ENCODE measurements at regions of chr18 and their contacts with region 1.

Region 1: DNA sequence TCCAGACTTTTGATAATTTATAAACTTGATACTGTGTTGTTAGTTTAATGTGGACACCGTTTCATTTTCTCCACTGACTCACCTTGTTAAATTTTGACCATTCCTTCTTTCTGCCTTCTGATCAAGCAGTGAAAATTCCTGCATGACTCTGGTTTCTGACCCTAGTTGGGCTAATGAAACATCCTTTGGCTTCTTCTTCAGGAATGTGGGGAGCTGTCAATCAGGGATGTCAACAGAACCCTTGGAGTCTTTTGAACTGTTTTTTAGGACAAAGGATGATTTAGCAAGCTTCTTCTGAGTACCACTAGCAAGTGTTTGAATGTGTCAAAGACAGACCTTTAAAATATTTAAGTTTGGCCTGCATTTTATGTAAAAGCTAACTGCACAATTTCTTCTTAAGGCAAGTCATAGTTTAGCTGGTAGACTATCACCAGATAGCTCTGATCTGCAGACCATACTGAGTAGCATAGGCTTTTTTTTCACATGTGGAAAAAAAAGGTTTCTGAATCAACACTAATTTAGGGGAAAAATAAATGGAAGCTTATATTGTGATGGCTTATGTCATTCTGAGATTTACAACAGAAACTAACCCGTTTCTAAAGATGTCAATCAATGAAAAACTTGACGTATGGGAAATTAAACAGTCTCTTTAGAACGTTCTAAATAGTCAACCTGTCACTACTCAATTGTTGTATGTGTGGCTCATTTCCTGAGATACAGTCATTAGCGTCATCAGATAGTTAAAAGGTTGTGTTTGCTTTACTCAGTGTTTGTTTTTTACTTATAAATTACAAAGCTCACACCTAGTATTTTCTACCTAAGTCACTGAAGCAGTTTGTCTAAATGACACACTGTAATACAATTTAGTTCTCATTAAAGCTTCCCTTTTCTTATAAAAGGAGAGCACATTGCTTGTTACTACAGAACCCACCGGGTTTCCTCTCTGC is 311.4 kb downstream of the PTPRM start:
- DNase-seq: no peak
- H3K4me3 Mint-ChIP-seq: peak overlapping the region; percentile 15
- H3K27ac Mint-ChIP-seq: peak overlapping the region; percentile 67
- H3K4me1 Mint-ChIP-seq: peaks cover 35% of the 10 kb centered on the region
- H3K27me3 Mint-ChIP-seq: no peaks in the 10 kb centered on the region
- CTCF ChIP-seq: no peak

Region 2: DNA sequence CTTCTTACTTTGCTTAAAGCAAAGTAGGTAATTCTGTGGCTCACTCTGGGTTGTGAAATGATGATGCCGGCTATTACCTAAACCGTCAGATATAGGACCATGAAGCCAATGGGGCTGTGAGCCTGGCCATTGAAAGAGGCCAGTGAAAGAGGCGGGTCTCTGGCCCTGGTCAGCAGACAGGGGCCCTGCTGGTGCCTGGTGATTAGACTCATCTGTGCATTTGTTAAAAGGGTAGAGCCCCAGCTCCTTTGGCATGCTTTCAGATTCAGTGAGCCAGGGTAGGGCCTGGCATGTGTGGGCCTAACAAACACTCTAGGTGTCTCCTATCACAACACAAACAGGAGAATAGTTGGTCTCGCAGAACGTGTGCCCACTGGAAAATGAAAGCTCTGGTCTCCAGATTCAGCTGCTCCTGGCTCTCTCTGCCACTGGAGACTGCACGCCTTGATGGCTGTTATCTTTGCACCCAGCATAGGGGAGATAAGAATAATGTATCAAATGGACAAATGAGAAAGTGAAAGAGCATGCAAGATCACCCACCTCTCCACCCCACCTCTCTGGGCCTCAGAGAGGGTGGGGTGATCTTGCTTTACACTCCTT is 640.8 kb before region 1 on chr18:
- CTCF ChIA-PET with region 1: no interaction called
- intact Hi-C with region 1: no loop called
- DNase-seq: no peak
- H3K4me3 Mint-ChIP-seq: no peak overlapping the region
- H3K27ac Mint-ChIP-seq: no peak overlapping the region
- H3K4me1 Mint-ChIP-seq: no peaks in the 10 kb centered on the region
- H3K27me3 Mint-ChIP-seq: peaks cover 65% of the 10 kb centered on the region
- CTCF ChIP-seq: no peak

Region 3: DNA sequence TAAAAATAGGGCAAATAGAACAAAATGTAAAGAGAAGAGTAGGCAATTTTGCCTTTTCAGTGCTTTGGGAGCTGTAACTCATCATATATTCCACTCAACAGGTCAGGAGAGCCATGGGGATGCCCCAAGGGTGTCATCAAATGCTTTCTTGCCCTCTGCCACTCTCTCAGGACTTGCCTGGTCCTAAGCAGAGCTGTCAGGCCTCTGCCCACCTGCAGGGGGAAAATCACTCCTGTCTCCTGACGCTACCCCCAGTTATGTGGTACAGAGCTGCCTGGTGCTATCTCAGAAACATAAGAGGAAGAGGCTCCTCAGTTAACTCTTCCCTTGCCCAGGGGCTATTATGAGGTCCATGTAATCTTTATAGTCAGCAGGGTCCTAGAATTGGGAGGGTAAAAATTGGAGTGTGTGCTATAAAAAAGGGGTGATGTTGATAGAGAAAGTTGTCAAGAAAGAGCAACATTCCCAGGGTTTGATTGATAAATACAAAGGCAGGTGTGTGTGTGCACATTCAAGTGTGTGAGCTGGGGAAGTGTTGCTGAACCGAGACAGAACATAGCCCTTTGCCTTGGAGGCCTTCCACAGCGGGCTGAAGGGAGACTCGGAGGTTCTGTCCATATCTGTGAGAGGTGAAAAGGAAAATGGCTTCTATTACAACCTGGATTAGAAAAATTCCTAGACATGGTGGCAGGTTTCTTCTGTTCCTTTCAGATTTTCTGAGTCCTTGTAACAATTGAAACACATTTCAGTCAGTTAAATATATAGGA is 286.1 kb before region 1 on chr18:
- CTCF ChIA-PET with region 1: no interaction called
- intact Hi-C with region 1: no loop called
- DNase-seq: no peak
- H3K4me3 Mint-ChIP-seq: no peak overlapping the region
- H3K27ac Mint-ChIP-seq: no peak overlapping the region
- H3K4me1 Mint-ChIP-seq: no peaks in the 10 kb centered on the region
- H3K27me3 Mint-ChIP-seq: no peaks in the 10 kb centered on the region
- CTCF ChIP-seq: no peak

Region 4: DNA sequence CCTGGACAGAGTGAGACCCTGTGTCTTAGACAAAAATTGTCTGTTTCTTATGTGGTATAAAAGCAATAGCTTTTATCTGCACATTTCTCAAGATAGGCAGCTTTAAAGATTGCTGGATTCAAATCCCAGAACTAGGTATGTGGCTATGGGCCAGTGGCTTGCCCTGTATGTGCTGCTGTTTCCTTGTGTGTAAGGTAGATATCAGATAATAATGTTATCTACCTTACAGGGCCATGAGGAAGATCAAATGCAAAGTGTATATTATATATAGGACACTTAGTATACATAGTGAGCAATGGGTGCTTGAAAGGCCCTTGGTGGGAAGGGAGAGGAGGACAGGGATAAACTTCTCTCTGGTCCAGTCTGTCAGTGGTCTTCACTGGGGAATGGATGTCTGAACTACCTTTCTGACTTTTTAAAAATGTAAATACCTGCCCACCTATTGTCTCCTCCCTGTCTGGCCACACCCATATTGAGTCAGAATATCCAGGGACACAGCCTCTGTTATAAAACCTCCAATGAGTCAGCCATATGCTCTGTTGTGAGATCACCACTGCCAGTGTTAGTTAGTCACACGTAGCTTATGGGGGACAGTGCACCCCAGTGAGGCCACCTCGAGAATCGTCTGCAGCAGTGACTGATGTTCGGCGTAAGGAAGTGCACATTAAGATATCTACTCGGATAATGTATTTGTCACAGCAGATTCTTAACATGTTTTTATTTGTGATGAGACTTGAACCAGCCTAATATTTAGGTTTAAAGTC is 72.0 kb after region 1 on chr18:
- CTCF ChIA-PET with region 1: no interaction called
- intact Hi-C with region 1: loop called (anchors 2 kb)
- DNase-seq: peak; percentile 68
- H3K4me3 Mint-ChIP-seq: no peak overlapping the region
- H3K27ac Mint-ChIP-seq: peak overlapping the region; percentile 81
- H3K4me1 Mint-ChIP-seq: peaks cover 28% of the 10 kb centered on the region
- H3K27me3 Mint-ChIP-seq: no peaks in the 10 kb centered on the region
- CTCF ChIP-seq: no peak

Region 5: DNA sequence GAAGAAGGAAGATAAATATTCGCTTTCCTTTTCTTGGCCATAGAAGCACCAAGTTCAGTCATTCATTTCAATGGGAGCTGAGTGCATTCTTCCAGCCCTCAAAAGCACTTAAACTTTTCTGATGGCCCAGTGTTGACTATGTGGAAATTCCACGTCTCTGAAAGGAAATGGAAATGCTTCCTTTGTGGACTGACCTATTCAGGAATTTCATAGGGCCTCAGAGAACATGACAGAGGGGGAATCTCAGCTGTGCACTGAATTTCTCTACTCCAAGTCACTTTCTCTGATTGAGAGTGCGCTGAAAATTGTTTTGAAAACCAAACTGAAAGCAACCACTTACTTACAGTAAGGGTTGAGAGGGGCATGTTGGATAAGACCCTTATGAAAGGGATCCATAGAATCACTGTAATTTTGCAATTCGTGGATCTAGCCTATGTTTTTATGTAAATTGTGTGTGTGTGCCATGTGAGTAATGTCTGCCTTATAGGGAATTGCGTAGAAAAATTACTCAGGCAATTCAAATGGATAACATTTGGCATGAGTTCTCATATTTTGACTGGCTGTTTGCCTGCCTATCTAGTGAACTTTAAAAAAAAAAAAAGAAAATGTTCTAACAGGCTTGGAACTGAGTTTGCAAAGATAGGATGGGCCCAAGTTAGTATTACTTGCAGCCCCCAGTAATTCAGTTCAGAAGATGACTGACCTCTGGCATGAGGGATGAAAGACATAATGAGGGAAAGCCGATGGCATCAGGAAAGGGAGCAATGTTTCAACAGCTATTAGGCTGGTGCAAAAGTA is 125.5 kb after region 1 on chr18:
- CTCF ChIA-PET with region 1: no interaction called
- intact Hi-C with region 1: no loop called
- DNase-seq: no peak
- H3K4me3 Mint-ChIP-seq: no peak overlapping the region
- H3K27ac Mint-ChIP-seq: no peak overlapping the region
- H3K4me1 Mint-ChIP-seq: no peaks in the 10 kb centered on the region
- H3K27me3 Mint-ChIP-seq: no peaks in the 10 kb centered on the region
- CTCF ChIP-seq: no peak

Region 6: DNA sequence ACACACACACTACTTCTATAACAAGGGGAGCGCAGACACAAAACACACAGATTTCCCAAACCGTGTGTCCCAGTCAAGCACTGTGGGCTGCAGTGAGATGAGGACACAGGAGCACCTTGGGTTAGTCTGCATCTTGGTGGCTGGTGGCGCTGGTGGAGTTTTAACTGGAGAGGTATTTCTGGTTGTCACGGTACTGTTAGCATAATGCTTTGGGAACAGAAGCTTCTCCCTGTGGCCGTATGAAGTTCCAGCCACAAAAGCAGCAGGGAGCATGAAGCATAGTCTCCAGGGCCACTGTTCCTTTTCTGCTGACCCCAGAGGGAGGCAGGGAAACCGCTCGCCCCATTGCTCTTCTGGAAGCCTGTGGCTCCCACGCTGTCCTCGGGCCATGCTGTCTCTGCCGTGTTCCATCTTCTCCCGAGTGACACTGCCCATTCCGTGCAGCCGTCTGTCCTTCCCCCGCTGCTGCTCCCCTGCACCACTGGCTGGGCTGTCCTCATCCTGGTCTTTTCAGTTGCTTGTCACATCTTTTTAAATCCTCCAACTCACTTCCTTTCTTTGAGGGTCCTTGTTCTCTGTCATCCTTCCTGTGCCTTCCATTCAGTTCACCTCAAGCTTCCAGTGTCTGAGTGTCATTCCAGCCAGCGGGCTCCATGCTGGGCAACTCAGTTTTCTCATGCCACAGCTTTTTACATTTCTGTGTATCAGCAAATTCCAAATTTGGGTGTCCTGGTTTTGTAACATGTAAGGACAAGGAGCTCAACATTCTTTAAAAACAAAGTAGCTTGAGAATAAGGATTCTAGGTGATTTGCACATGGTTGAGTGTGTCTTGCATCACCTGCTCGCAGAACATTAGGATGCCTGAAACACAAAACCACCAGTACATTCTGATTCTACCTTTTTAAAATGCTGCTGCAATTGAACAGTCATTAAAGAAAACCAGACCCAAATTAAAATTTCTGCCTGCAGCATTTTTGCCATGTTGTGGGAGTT is 951.8 kb after region 1 on chr18:
- CTCF ChIA-PET with region 1: no interaction called
- intact Hi-C with region 1: no loop called
- DNase-seq: no peak
- H3K4me3 Mint-ChIP-seq: no peak overlapping the region
- H3K27ac Mint-ChIP-seq: peak overlapping the region; percentile 23
- H3K4me1 Mint-ChIP-seq: peaks cover 14% of the 10 kb centered on the region
- H3K27me3 Mint-ChIP-seq: no peaks in the 10 kb centered on the region
- CTCF ChIP-seq: no peak

Measured in Calu3 (cell line).